Heart right ventricle (tissue), 16 donors: ENCODE measurements at regions of chr17 and their contacts with region 1.

Region 1: DNA sequence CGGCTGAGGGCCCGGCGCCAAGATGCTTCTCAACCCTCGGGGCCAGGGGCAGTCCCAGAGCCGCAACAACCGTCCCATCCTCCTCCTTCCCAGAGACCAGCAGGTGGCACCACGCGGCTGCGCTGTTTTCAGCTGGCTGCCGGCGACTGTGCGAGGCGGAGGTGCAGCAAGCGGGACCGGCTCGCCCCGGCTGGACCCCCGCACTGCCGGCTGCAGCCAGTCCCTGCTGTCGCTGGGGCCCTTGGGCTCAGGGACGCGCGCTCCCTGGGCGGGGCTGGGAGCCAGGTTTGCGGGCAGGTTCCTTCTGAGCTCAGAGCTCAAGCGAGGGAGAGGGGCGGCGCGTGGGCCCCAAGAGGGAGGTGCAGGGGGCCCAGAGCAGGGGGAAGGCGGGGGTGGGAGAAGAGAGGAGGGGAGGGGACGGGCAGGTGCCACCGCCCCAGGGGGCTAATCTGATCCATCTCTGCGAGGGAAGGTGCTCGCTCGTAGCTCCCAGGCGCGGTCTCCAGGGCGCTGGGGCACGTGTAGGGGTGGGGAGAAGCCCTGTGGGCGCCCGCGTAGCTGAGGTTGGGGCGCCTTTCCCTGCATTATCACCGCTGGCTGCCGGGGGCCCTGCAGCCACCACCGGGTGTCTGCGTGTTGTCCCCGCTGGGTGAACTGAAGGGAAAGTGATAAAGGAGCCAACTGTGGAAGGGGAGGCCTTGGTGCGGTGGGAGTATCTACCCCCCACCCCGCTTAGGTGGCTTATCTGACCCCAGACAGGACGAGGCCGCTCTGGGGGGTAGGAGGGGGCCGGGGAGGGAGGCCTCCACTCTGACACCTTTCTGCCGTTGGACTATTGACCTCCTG is 24.2 kb downstream of the STAT5A start:
- DNase-seq: peak; percentile 86 to 89
- ATAC-seq: peak; percentile 72 to 90 (median 84)
- H3K4me3 ChIP-seq: peak overlapping the region in 7 of 10 donors; percentile 10 to 34 (median 25)
- H3K27ac ChIP-seq: peak overlapping the region; percentile 24 to 86 (median 77)
- H3K4me1 ChIP-seq: peaks cover 10 to 73% (median 35%) of the 10 kb centered on the region in 9 donors
- H3K27me3 ChIP-seq: no peaks in the 10 kb centered on the region
- CTCF ChIP-seq: peak; percentile 34 to 81 (median 66)

Region 2: DNA sequence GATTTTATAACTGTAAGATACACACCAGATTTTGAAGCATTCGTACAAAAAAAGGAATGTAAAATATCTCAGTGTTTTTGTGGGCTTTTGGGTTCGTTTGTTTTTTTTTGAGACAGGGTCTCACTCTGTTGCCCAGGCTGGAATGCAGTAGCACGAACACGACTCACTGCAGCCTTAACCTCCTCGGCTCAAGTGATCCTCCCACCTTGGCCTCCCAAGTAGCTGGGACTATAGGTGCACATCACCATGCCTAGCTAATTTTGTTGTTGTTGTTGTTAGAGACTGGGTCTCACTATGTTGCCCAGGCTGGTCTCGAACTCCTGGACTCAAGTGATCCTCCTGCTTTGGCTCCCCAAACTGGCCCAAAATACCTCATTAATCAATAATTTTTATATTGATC is 52.2 kb before region 1 on chr17:
- intact Hi-C with region 1: no loop called
- DNase-seq: no peak
- ATAC-seq: no peak
- H3K4me3 ChIP-seq: no peak overlapping the region
- H3K27ac ChIP-seq: no peak overlapping the region
- H3K4me1 ChIP-seq: peaks cover 0 to 15% (median under 1%) of the 10 kb centered on the region in 9 donors
- H3K27me3 ChIP-seq: no peaks in the 10 kb centered on the region
- CTCF ChIP-seq: no peak

Region 3: GRCh38 chr17:42527273-42527703 is 214.8 kb after region 1 on chr17:
- intact Hi-C with region 1: loop called in 1 of 10 experiments (anchors 5 kb)
- DNase-seq: peak in 1 of 2 donors; percentile 81
- ATAC-seq: peak; percentile 67 to 92 (median 81)
- H3K4me3 ChIP-seq: no peak overlapping the region
- H3K27ac ChIP-seq: peak overlapping the region in 8 of 10 donors; percentile 4 to 97 (median 70)
- H3K4me1 ChIP-seq: peaks cover 16 to 61% (median 40%) of the 10 kb centered on the region in 9 donors
- H3K27me3 ChIP-seq: no peaks in the 10 kb centered on the region
- CTCF ChIP-seq: peak; percentile 68 to 91 (median 86)